ENCODE measurements at regions of chr21 and their contacts with region 1.

Region 1: DNA sequence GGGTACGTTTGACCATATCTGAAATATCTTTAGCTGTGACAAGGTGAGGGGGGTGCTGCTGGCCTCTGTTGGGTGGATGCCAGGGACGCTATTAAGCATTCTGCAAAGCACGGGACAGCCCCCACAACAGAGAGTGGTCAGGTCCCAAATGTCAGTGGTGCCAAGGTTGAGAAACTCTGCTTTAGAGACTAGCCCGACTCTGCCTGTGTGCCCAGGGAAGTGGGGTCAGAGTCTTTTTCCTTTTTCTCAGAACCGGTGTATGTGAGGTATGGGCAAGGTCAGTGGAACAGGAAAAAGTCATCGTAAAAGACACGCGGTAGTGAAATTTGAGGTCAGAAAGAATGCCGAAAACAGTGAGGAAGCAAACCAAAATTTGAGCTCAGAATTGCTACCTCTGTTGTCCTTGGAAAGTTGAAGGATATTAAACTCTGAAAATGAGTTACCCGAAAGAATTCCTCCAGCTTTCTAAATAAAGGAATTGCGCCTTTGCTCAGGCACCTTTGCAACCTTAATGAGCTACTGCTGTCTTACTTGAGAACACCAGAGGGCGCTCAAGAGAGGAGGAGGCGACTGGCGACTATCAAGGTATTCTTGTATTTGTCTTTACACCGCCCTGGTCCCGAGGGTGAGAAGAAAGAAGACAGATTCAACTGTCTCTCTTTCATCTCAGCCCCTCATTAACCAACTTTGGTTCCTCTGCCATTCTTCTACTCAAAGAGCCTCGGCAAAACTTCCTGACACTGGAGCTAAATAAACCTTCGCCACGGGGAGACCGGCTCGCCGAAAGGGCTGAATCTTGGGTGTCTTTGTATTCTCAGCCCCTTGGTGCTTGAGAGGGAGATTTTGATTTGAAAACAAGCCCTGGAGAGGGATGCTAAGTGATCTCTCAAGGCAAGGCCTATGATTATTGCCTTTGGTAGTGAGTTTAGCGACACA is 85.4 kb upstream of the OLIG2 start:
- DNase-seq: peak; percentile 60
- H3K4me3 Mint-ChIP-seq: no peak overlapping the region
- H3K27ac Mint-ChIP-seq: no peak overlapping the region
- H3K4me1 Mint-ChIP-seq: peaks cover 4% of the 10 kb centered on the region
- H3K27me3 Mint-ChIP-seq: no peaks in the 10 kb centered on the region

Region 2: DNA sequence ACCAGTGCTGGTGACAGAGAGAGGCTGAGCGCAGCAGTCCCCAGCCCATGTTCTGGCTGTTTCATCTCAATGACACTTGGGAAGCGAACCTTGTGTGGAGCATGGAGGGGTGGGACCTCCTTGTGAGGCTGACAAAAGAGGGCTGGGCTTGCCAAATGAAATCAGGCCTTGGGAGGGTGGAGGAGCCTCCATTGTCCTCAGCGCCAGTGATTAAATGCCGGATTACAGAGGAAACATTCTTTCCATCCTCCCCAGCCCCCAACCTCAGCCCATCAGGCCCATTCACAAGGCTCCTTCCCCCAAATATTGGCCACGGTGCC is 105.5 kb before region 1 on chr21:
- CTCF ChIA-PET with region 1: interaction called, 16 read pairs
- intact Hi-C with region 1: no loop called
- DNase-seq: no peak
- H3K4me3 Mint-ChIP-seq: no peak overlapping the region
- H3K27ac Mint-ChIP-seq: no peak overlapping the region
- H3K4me1 Mint-ChIP-seq: no peaks in the 10 kb centered on the region
- H3K27me3 Mint-ChIP-seq: no peaks in the 10 kb centered on the region

Region 3: GRCh38 chr21:32916522-32917099 is 23.7 kb before region 1 on chr21:
- CTCF ChIA-PET with region 1: interaction called, 18 read pairs
- intact Hi-C with region 1: no loop called
- DNase-seq: peak; percentile 13
- H3K4me3 Mint-ChIP-seq: no peak overlapping the region
- H3K27ac Mint-ChIP-seq: no peak overlapping the region
- H3K4me1 Mint-ChIP-seq: peaks cover 27% of the 10 kb centered on the region
- H3K27me3 Mint-ChIP-seq: no peaks in the 10 kb centered on the region

Region 4: DNA sequence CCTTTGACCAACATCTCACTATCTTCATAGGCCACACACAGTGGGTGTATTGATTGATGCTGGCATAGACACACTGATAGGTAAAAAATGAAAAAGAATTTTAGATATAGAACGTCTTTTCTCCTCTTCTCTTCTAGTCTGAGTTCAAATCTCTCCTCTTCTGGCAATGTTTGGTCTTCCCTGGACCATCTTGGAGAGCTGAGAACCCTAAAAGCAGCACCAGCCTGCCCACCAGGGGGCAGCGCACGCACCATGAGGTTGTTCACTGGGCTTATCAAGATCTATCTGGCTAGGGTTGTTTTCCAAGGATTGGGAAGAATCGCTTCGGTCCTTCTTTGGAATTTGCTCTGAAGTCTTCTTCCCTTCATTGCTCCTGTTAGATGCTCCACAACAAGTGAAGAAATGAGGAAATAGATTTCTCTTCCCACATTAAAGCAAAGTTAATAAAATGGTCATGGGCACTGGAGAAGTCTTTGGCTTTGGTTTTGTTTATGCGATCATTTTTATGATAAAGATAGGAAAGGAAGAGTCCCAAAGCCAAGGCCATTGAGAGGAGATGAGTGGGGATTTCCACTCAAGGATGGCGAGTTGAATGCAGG is 18.6 kb before region 1 on chr21:
- CTCF ChIA-PET with region 1: interaction called, 18 read pairs
- intact Hi-C with region 1: no loop called
- DNase-seq: peak; percentile 59
- H3K4me3 Mint-ChIP-seq: no peak overlapping the region
- H3K27ac Mint-ChIP-seq: no peak overlapping the region
- H3K4me1 Mint-ChIP-seq: peaks cover 2% of the 10 kb centered on the region
- H3K27me3 Mint-ChIP-seq: no peaks in the 10 kb centered on the region

Region 5: GRCh38 chr21:32966120-32966519 is 25.8 kb after region 1 on chr21:
- CTCF ChIA-PET with region 1: interaction called, 11 read pairs
- intact Hi-C with region 1: no loop called
- DNase-seq: no peak
- H3K4me3 Mint-ChIP-seq: no peak overlapping the region
- H3K27ac Mint-ChIP-seq: no peak overlapping the region
- H3K4me1 Mint-ChIP-seq: no peaks in the 10 kb centered on the region
- H3K27me3 Mint-ChIP-seq: no peaks in the 10 kb centered on the region

Measured in activated naive CD4-positive, alpha-beta T cell treated with anti-CD3 and anti-CD28 coated beads for 36 hours (primary cell).